Naive thymus-derived CD4-positive, alpha-beta T cell (primary cell): ENCODE measurements at regions of chrX and their contacts with region 1.

Region 1: GRCh38 chrX:119698845-119699244 is 5.9 kb upstream of the SEPTIN6 start:
- DNase-seq: peak in 5 of 9 donors; percentile 18 to 55 (median 49)
- ATAC-seq: peak; percentile 60
- H3K4me3 ChIP-seq: no peak overlapping the region
- H3K4me3 Mint-ChIP-seq: no peak overlapping the region
- H3K27ac ChIP-seq: no peak overlapping the region
- H3K27ac Mint-ChIP-seq: peak overlapping the region in 1 of 9 donors; percentile 63
- H3K4me1 ChIP-seq: no peaks in the 10 kb centered on the region
- H3K4me1 Mint-ChIP-seq: peaks cover 5 to 15% (median 11%) of the 10 kb centered on the region in 7 donors
- H3K27me3 ChIP-seq: no peaks in the 10 kb centered on the region
- H3K27me3 Mint-ChIP-seq: no peaks in the 10 kb centered on the region

Region 2: DNA sequence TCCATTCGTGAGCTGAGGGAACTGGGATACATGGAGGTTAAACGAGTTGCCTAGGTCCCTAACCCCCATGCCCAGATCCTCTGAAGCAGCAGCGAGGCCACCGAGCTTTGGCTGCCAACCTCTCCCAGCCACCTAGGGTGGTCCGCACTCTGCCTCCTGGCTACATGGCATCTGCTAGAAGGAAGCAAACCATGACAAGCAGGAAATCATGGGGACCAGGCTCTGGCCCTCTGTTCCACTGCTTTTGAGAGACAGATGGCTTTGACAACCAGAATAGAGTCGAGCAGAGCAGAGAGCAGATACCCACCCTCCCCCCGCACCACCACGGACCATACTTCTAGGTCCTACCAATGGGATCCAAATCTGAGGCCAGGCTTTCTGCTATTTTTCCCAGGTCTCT is 55.1 kb before region 1 on chrX:
- CTCF ChIA-PET with region 1: no interaction called
- POLR2A ChIA-PET with region 1: no interaction called
- intact Hi-C with region 1: no loop called
- DNase-seq: no peak
- ATAC-seq: no peak
- H3K4me3 ChIP-seq: no peak overlapping the region
- H3K4me3 Mint-ChIP-seq: no peak overlapping the region
- H3K27ac ChIP-seq: no peak overlapping the region
- H3K27ac Mint-ChIP-seq: peak overlapping the region in 5 of 9 donors; percentile 18 to 76 (median 62)
- H3K4me1 ChIP-seq: peaks cover 0 to 20% of the 10 kb centered on the region in 2 donors
- H3K4me1 Mint-ChIP-seq: peaks cover 0 to 33% (median 21%) of the 10 kb centered on the region in 7 donors
- H3K27me3 ChIP-seq: no peaks in the 10 kb centered on the region
- H3K27me3 Mint-ChIP-seq: no peaks in the 10 kb centered on the region

Region 3: GRCh38 chrX:119775517-119776238 is 76.8 kb after region 1 on chrX:
- CTCF ChIA-PET with region 1: no interaction called
- POLR2A ChIA-PET with region 1: no interaction called
- intact Hi-C with region 1: loop called in 1 of 2 experiments (anchors 1 kb)
- DNase-seq: no peak
- ATAC-seq: peak; percentile 59
- H3K4me3 ChIP-seq: no peak overlapping the region
- H3K4me3 Mint-ChIP-seq: peak overlapping the region in 2 of 10 donors; percentile 31 to 54
- H3K27ac ChIP-seq: no peak overlapping the region
- H3K27ac Mint-ChIP-seq: peak overlapping the region in 2 of 9 donors; percentile 36 to 73
- H3K4me1 ChIP-seq: no peaks in the 10 kb centered on the region
- H3K4me1 Mint-ChIP-seq: peaks cover 0 to 6% (median 0%) of the 10 kb centered on the region in 7 donors
- H3K27me3 ChIP-seq: no peaks in the 10 kb centered on the region
- H3K27me3 Mint-ChIP-seq: no peaks in the 10 kb centered on the region

Region 4: DNA sequence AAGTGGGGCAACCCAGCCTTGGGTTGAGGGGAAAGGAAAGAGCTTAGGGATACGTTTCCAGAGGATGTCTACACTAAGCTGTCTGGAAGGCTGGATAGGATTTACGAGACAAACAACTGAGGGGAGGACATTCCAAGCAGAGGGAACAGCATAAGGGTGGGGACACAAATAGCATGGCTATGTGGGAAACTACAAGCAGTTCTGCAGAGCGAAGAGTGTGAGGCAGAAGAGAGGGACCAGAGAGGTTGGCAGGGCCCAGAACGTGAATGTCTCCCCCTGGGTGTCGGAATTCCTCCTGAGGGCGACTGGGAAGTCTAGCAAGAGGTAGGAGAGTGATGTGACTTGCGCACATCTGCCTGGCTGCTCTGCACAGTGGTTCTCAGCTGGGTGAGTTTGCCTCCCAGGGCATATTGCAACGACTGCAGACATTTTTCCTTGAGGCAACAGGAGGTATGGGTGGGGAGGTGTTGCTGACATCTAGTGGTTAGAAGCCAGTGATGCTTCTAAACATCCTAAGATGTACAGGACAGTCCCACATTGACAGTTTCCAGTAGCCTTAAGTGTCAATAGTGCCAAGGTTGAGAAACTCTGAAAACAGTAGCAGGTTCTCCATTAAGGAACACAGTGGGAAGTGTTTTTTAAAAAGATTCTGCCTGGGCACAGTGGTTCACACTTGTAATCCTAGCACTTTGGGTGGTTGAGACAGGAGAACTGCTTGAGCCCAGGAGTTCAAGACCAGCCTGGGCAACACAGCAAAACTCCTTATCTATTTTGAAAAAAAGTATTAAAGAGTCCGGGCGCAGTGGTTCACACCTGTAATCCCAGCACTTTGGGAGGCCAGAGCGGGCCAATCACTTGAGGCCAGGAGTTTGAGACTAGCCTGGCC is 181.9 kb after region 1 on chrX:
- CTCF ChIA-PET with region 1: no interaction called
- POLR2A ChIA-PET with region 1: no interaction called
- intact Hi-C with region 1: loop called in 1 of 2 experiments (anchors 2 kb)
- DNase-seq: peak in 7 of 9 donors; percentile 21 to 57 (median 36)
- ATAC-seq: peak; percentile 93
- H3K4me3 ChIP-seq: no peak overlapping the region
- H3K4me3 Mint-ChIP-seq: no peak overlapping the region
- H3K27ac ChIP-seq: peak overlapping the region; percentile 20
- H3K27ac Mint-ChIP-seq: peak overlapping the region in 8 of 9 donors; percentile 36 to 88 (median 66)
- H3K4me1 ChIP-seq: peaks cover 0 to 7% of the 10 kb centered on the region in 2 donors
- H3K4me1 Mint-ChIP-seq: peaks cover 0 to 26% (median 18%) of the 10 kb centered on the region in 7 donors
- H3K27me3 ChIP-seq: no peaks in the 10 kb centered on the region
- H3K27me3 Mint-ChIP-seq: no peaks in the 10 kb centered on the region

Region 5: DNA sequence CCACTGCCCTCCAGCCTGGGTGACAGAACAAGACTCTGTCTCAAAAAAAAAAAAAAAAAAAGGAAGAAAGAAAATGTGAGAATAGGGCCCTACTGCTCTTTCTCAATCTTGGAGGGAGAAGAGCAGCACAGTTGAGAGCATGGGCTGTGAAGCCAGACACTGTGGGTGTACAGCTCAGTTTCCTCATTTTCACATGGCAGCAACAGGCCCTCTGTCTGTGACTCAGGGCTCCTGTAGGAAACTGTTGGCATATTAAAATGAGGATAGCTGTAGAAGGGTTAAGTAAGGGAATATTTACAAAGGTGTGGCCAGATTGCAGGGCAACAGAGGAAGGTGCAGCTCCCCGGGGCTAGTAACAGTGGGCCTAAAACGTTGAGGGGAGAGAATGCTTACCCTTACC is 200.3 kb after region 1 on chrX:
- CTCF ChIA-PET with region 1: no interaction called
- POLR2A ChIA-PET with region 1: no interaction called
- intact Hi-C with region 1: no loop called
- DNase-seq: no peak
- ATAC-seq: no peak
- H3K4me3 ChIP-seq: no peak overlapping the region
- H3K4me3 Mint-ChIP-seq: no peak overlapping the region
- H3K27ac ChIP-seq: no peak overlapping the region
- H3K27ac Mint-ChIP-seq: no peak overlapping the region
- H3K4me1 ChIP-seq: no peaks in the 10 kb centered on the region
- H3K4me1 Mint-ChIP-seq: peaks cover 0 to 4% (median 0%) of the 10 kb centered on the region in 7 donors
- H3K27me3 ChIP-seq: no peaks in the 10 kb centered on the region
- H3K27me3 Mint-ChIP-seq: no peaks in the 10 kb centered on the region